ENCODE measurements at regions of chr19 and their contacts with region 1.

Region 1: DNA sequence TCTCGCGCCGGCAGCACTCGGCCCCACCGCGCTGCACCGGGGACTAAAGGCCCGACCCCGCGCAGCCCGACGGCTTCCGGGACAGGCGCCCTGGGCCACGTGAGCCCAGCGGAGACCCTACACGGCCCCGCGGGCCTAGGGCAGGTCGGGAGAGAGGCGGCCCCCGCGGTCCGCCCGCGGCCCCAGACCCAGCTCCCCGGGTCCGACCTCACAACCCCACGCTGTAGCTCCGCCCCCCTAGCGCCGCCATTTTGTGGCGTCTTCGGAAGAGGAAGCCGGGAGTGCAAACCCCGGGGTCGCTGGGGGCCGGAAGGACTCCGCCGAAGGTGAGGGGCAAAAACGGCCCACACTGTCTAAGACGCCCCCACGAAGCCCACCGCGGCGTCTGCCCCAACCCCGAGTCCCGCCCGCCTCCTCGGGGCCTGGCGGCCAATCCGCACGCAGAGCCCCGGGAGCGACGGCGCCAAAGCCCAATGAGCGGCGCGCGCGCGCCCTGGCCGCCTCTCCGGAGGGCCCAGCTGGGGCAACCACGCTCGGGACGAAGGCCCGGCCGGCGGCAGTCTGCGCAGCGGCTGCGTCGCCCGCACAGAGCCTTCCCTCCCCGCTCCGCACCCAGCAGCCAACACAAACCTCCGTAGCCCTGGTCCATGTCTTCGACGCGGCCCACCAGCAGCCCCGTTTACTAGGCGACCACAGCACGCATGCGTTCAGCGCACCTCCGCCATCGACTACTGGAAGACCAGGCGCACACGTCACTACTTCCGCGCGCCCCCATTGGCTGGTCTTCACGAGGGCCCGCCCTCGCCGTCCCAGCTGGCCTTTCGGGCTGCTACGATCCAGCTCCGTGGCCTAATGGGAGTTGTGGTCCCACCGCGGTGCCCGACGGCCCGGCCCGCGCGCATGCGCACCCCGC is at the start of gene AKAP8:
- DNase-seq: peak; percentile 98
- H3K4me3 Mint-ChIP-seq: peak within 1 kb of the TSS; percentile 98
- H3K27ac Mint-ChIP-seq: peak within 1 kb of the TSS; percentile 100
- H3K4me1 Mint-ChIP-seq: peaks cover 35% of the 10 kb centered on the region
- H3K27me3 Mint-ChIP-seq: no peaks in the 10 kb centered on the region
- total RNA-seq, gene AKAP8: 52.7 and 57.5 TPM in 2 replicates

Region 2: GRCh38 chr19:15177269-15178116 is 201.8 kb before region 1 on chr19:
- intact Hi-C with region 1: loop called (anchors 1 kb)
- DNase-seq: peak; percentile 74
- H3K4me3 Mint-ChIP-seq: peak overlapping the region; percentile 13
- H3K27ac Mint-ChIP-seq: no peak overlapping the region
- H3K4me1 Mint-ChIP-seq: peaks cover 6% of the 10 kb centered on the region
- H3K27me3 Mint-ChIP-seq: peaks cover 6% of the 10 kb centered on the region

Region 3: DNA sequence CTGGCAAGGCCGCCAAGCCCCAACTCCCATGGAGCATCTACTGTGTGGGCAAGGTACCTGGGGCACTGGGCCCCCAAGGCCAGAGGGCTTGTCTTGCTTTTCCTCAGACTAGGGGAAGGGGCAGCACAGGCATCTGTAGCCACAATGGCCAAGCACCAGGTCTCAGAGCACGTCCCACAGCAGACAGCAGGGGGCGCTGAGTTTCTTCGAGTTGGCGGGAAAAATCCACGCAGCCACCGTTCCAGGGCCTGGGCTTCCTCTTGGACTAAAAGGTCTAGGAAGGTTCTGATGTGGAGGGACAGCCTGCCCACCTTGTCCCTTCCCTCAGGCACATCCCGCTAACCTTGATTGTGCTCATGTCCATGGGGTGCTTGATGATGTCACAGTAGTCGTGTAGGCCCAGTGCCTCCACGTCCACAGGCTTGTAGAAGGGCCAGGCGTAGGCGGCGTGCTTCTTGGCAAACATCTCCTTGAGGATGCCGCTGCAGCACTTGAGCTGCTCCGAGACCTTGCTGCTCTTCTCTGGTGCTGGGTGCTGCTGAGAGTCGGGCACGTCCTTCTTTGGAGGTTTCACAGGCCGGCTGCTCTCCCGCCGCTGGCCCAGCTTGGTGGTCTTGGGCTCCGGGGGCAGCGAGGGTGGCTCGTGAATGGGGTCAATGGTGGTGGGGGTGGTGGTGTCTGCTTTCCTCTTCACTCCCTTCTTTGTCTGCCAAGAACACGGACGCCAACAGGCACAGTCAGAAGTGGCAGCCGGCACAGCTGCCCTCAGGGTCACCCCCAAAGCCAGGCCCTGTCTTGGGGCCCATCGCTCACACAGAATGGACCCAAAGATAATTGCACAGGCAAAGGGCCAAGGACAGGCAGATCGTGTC is 115.0 kb before region 1 on chr19:
- intact Hi-C with region 1: loop called (anchors 1 kb)
- DNase-seq: peak; percentile 42
- H3K4me3 Mint-ChIP-seq: no peak overlapping the region
- H3K27ac Mint-ChIP-seq: no peak overlapping the region
- H3K4me1 Mint-ChIP-seq: peaks cover 14% of the 10 kb centered on the region
- H3K27me3 Mint-ChIP-seq: no peaks in the 10 kb centered on the region

Region 4: DNA sequence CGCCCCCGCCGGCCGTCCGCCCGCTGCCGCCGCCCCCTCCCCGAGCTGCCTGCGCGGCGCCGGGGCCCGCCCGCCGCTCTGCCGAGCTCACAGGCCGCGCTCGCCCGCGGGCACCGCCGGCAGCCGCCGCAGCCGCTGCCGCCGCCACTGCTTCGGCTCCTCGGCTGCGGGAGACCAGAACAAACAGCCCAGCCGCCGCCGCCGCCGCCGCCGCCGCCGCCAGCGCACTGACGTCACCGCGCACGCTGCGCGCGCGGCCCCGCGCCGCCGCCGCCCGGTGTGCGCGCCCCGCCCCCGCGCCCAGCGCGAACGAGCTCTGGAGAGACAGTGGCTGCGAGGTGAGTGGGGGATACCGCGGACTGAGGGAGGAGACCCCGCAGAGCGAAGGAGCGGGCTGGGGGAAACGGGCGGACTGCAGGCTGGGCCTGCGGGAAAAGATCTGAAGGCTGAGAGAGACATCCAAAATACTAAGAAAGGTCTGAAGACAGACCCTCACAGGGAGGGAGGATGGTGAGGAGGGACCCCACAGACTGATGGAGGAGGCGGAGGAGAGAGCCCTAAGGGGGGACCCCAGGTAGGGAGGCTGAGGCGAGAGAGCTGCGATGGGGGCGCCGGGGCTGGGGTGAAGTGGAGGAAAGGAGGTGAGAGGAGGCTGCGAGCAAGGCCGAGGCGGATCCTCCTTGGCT is 46.9 kb before region 1 on chr19 and contains the start of gene BRD4:
- intact Hi-C with region 1: loop called (anchors 1 kb)
- DNase-seq: peak; percentile 78
- H3K4me3 Mint-ChIP-seq: peak within 1 kb of the TSS; percentile 98
- H3K27ac Mint-ChIP-seq: peak within 1 kb of the TSS; percentile 98
- H3K4me1 Mint-ChIP-seq: peaks cover 35% of the 10 kb centered on the region
- H3K27me3 Mint-ChIP-seq: no peaks in the 10 kb centered on the region
- total RNA-seq, gene BRD4: 122 and 129 TPM in 2 replicates

Region 5: DNA sequence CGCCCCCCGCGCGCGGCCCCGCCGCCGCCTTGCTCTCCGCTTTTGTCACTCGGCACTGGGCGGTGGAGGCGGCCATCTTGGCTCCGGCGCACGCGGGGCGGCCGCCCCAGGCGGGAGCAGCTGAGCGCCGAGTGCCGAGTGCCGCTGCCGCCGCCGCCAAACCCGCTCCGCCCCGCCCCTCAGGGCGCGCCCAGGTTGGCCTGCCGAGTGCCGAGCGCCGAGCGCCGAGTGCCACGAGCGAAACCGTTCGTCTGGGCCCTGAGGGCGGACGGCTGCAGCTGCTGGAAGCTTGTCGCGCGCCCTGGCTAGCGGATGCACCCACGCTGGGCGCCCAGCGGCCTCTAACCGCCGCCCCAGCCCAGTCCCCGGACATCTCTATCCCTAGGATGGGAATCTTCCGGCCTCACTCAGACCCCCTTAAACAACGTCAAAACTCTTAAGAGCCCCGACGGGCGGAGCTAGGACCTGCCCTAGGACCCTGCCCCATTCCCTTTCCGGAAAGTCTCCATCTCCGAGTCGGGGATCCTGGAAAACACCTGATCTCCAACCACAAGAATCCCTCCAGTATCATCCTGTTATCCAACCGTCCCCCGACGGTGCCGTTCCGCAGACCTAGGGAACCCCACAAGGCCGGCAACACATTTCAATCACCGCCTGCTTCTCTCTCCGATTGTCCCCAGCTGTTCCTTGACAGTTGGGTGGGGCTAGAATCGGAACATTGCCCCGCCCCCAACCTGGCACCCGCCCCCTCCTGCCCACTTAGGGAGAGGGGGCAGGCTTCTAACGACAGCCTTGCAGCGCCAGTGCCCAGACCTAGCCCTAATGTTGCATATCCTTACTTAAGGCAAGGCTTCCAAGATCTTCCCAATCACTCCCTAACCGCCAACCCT is 53.5 kb after region 1 on chr19:
- intact Hi-C with region 1: loop called (anchors 1 kb)
- DNase-seq: peak; percentile 94
- H3K4me3 Mint-ChIP-seq: peak overlapping the region; percentile 91
- H3K27ac Mint-ChIP-seq: peak overlapping the region; percentile 88
- H3K4me1 Mint-ChIP-seq: peaks cover 31% of the 10 kb centered on the region
- H3K27me3 Mint-ChIP-seq: no peaks in the 10 kb centered on the region

Region 6: DNA sequence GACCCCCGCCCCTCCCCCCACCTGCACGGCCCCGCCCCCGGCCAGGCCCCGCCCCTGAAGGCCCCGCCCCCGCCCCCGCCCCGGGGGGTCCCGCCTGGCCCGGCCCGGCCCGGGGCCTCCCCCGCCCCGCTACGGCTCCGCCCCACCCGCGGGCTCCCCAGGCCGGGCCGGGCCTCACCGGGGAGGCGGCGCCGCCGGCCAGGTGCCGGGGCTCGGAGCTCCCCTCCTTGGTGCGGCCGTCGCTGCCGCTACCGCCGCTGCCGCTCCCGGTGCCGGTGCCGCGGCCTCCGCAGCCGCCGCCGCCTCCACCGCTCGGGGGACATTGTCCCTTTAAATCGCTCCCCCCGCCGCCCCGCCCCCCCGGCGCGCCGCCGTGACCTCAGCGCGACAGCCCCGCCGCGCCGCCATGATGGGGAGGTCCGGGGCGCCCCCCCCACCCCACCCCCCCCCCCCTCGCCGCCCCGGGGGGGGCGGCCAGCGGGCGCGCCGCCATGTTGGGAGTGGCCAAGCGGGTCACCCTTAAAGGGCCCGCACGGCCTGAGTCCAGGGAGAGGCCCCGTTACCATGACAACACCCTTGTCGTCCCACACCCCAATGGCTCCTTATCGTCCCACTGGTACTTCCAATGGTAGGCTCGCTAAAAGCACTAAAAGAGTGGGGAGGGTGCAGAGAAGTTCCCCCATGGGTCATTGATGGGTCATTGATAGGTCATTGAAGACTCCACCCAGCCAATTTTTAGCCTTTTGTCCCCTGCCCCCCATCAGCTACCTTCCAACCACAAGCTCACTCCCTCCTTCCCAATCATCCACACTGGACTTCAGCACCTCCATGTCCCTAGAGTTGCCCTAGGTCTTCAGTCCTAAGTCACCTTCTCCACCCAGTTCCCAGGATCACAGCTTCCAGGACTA is 70.5 kb after region 1 on chr19 and contains the start of gene WIZ:
- intact Hi-C with region 1: loop called (anchors 1 kb)
- DNase-seq: peak; percentile 74
- H3K4me3 Mint-ChIP-seq: peak within 1 kb of the TSS; percentile 86
- H3K27ac Mint-ChIP-seq: peak within 1 kb of the TSS; percentile 98
- H3K4me1 Mint-ChIP-seq: peaks cover 32% of the 10 kb centered on the region
- H3K27me3 Mint-ChIP-seq: peaks cover 3% of the 10 kb centered on the region
- total RNA-seq, gene WIZ: 37.6 and 38.7 TPM in 2 replicates